Astrocyte of the cerebellum (primary cell): ENCODE measurements at regions of chr16 and their contacts with region 1.

Region 1: GRCh38 chr16:47320546-47321310 is 140.1 kb downstream of the ITFG1 start:
- DNase-seq: no peak
- H3K4me3 ChIP-seq: no peak overlapping the region
- CTCF ChIP-seq: no peak

Region 2: DNA sequence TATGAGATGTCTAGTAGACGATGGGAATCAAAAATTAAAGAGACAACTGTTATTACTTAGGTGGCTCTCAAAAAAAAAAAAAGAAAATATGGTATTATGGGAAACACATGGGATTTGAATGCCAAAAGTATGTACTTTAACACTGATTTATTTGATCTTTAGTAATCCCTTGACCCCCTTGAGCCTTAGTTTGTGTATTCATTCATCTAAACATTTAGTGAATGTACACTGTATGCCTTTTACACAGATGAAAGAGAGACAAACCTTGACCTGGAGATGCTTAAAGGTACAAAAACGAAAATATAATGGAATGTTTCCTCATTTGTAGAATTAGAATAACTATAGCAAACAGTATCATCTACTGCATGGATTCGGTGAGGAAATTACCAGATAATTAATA is 138.4 kb before region 1 on chr16:
- in situ Hi-C with region 1: no loop called
- DNase-seq: no peak
- H3K4me3 ChIP-seq: no peak overlapping the region
- CTCF ChIP-seq: no peak

Region 3: DNA sequence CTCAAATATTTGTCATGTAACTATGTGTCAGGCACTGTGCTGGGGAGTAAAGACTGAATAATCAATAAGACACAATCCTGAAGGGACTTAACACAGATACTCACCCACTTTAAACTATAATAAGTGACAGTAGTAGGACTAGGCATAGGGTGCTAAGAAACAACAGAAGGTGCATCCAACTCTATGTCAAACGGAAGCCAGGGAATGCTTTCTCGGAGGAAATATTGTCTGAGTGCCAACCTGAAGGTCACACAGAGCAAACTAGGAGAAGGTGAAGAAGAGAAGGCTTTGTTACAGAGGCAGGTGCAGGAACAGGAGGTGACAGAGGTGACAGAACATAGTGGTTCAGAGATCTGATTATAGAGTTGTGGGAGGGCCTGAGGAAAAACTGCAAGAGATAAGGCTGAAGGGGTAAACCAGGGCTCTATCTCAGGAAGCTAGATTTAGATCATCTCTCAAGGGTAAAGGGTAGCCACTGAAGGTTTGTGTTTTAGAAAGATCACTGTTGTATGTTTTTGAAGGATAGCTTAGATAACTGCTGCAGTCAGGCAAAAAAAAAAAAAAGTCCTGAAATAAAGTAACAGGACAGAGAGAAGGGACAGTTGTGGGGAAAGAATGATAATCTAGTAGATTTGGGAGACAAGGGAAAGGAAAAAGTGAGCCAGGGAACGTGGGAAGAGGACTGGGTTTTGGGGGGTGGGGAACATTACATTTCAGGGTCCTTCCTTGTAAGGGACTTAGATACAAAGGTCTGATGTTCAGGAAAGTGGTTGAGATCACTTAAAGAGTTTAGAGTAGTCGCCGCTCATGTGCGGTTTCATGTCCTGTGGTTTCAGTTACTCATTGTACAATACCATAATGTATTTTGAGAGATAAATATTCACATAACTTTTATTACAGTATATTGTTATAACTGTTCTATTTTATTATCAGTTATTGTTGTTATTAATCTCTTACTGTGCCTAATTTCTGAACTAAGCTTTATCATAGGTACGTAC is 91.4 kb before region 1 on chr16:
- in situ Hi-C with region 1: no loop called
- DNase-seq: no peak
- H3K4me3 ChIP-seq: no peak overlapping the region
- CTCF ChIP-seq: no peak

Region 4: GRCh38 chr16:47254756-47255155 is 66.0 kb before region 1 on chr16:
- in situ Hi-C with region 1: loop called (anchors 5 kb)
- DNase-seq: no peak
- H3K4me3 ChIP-seq: no peak overlapping the region
- CTCF ChIP-seq: no peak

Region 5: DNA sequence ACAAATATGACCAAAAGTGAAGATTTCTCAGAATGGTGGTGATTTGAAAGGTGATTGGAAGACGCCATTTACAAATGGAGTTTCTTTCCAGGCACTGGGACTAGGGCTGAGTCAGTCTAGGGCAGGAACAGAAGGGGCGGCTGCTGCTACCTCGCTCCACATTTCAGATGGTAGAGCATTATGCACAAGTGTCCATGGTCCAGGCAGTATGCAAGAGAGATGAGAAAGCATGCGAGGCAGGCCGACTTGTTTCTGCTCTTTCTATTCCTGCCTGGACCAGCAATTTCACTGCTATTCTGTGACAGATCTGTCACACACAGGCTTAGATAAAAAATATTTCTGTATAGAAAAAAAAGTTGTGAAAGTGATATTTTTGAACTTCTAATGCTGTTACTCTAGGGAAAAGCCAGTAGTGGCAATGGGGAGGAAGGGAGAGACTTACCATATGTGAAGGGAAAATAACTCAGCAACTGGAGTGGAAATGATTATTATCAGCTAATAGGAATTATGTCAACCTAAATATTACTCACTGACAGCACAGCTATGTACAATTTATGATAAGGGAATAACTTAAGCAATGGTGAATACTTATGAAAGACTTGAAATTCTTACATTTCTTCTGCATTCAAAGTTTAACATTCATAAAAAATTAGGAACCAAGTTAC is 42.3 kb before region 1 on chr16:
- in situ Hi-C with region 1: no loop called
- DNase-seq: no peak
- H3K4me3 ChIP-seq: no peak overlapping the region
- CTCF ChIP-seq: no peak